ENCODE measurements at regions of chr4 and their contacts with region 1.

Region 1: GRCh38 chr4:62644372-62644771 is 1444.2 kb downstream of the ADGRL3 start:
- DNase-seq: peak; percentile 78
- H3K4me3 Mint-ChIP-seq: no peak overlapping the region
- H3K27ac Mint-ChIP-seq: no peak overlapping the region
- H3K4me1 Mint-ChIP-seq: peaks cover 18% of the 10 kb centered on the region
- H3K27me3 Mint-ChIP-seq: no peaks in the 10 kb centered on the region
- CTCF ChIP-seq: peak; percentile 66

Region 2: GRCh38 chr4:60805500-60806313 is 1838.7 kb before region 1 on chr4:
- CTCF ChIA-PET with region 1: interaction called, 3 read pairs
- POLR2A ChIA-PET with region 1: no interaction called
- intact Hi-C with region 1: loop called (anchors 10 kb)
- DNase-seq: peak; percentile 51
- H3K4me3 Mint-ChIP-seq: no peak overlapping the region
- H3K27ac Mint-ChIP-seq: no peak overlapping the region
- H3K4me1 Mint-ChIP-seq: peaks cover 5% of the 10 kb centered on the region
- H3K27me3 Mint-ChIP-seq: no peaks in the 10 kb centered on the region
- CTCF ChIP-seq: peak; percentile 57

Region 3: DNA sequence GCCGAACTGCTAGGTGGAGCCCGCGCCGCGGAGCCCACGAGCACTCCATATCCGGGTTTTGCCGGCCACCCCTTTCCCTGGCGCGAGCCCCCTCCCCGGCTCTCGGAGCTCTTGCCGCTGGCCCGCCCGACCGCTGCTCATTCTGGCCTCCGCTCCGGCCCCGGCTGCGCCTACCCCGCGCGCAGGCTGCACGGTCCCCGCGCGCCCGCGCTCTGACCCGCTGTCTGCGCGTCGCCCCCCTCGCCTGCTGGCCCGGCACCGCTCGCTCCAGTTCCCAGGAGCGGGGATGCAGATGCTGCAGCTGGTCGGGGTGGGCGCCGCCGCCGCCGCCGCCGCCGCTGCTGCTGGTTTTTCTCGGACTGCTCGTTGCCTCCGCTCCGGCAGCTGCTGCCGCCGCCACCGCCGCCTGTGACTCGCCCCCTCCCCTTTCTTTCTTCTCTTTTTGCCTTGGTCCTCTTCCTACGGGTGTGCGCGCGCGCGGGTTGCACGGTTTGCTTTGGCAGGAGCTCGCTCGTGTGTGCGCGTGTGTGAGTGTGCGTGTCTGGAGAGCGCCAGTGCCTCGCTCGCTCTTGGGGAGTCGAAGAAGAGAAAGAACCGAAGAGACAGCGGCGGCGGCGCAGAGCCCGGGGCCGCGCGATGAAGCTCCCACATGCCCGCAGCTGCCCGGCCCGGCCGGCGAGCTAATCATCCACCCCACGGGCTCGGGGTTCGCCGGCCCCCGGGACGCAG is 1444.0 kb before region 1 on chr4 and contains the start of gene ADGRL3:
- CTCF ChIA-PET with region 1: interaction called, 3 read pairs
- POLR2A ChIA-PET with region 1: no interaction called
- intact Hi-C with region 1: loop called (anchors 10 kb)
- DNase-seq: peak; percentile 38
- H3K4me3 Mint-ChIP-seq: peak within 1 kb of the TSS; percentile 79
- H3K27ac Mint-ChIP-seq: no peak within 1 kb of the TSS
- H3K4me1 Mint-ChIP-seq: peaks cover 22% of the 10 kb centered on the region
- H3K27me3 Mint-ChIP-seq: no peaks in the 10 kb centered on the region
- CTCF ChIP-seq: no peak
- total RNA-seq, gene ADGRL3: 3.5 and 3.6 TPM in 2 replicates

Region 4: GRCh38 chr4:61520681-61521160 is 1123.7 kb before region 1 on chr4:
- CTCF ChIA-PET with region 1: no interaction called
- POLR2A ChIA-PET with region 1: no interaction called
- intact Hi-C with region 1: loop called (anchors 10 kb)
- DNase-seq: peak; percentile 62
- H3K4me3 Mint-ChIP-seq: no peak overlapping the region
- H3K27ac Mint-ChIP-seq: no peak overlapping the region
- H3K4me1 Mint-ChIP-seq: peaks cover 11% of the 10 kb centered on the region
- H3K27me3 Mint-ChIP-seq: no peaks in the 10 kb centered on the region
- CTCF ChIP-seq: no peak

Region 5: GRCh38 chr4:61741327-61742096 is 902.9 kb before region 1 on chr4:
- CTCF ChIA-PET with region 1: no interaction called
- POLR2A ChIA-PET with region 1: interaction called, 3 read pairs
- intact Hi-C with region 1: loop called (anchors 5 kb)
- DNase-seq: peak; percentile 44
- H3K4me3 Mint-ChIP-seq: no peak overlapping the region
- H3K27ac Mint-ChIP-seq: no peak overlapping the region
- H3K4me1 Mint-ChIP-seq: no peaks in the 10 kb centered on the region
- H3K27me3 Mint-ChIP-seq: no peaks in the 10 kb centered on the region
- CTCF ChIP-seq: no peak

Region 6: GRCh38 chr4:62243895-62244294 is 400.5 kb before region 1 on chr4:
- CTCF ChIA-PET with region 1: interaction called, 4 read pairs
- POLR2A ChIA-PET with region 1: no interaction called
- intact Hi-C with region 1: loop called (anchors 1 kb)
- DNase-seq: peak; percentile 10
- H3K4me3 Mint-ChIP-seq: no peak overlapping the region
- H3K27ac Mint-ChIP-seq: no peak overlapping the region
- H3K4me1 Mint-ChIP-seq: no peaks in the 10 kb centered on the region
- H3K27me3 Mint-ChIP-seq: no peaks in the 10 kb centered on the region
- CTCF ChIP-seq: peak; percentile 8

Region 7: GRCh38 chr4:62328526-62328925 is 315.8 kb before region 1 on chr4:
- CTCF ChIA-PET with region 1: no interaction called
- POLR2A ChIA-PET with region 1: no interaction called
- intact Hi-C with region 1: no loop called
- DNase-seq: peak; percentile 35
- H3K4me3 Mint-ChIP-seq: no peak overlapping the region
- H3K27ac Mint-ChIP-seq: no peak overlapping the region
- H3K4me1 Mint-ChIP-seq: peaks cover 13% of the 10 kb centered on the region
- H3K27me3 Mint-ChIP-seq: no peaks in the 10 kb centered on the region
- CTCF ChIP-seq: no peak

Region 8: DNA sequence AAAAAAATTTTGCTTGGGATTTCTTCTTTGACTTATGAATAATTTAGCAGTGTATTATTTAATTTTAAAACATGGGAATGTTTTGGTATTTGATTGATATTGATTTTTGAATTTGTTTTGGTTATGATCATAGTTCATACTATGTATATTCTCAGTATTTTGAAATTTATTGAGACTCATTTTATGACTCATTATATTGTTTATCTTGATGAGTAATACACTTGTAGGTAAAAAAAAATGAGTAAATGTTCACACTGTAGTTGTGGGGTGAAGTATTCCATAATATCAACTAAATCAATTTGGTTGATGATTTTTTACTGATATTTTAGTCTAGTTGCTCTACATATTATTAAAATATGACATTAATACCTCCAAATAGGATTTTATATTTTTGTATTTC is 302.0 kb before region 1 on chr4:
- CTCF ChIA-PET with region 1: no interaction called
- POLR2A ChIA-PET with region 1: no interaction called
- intact Hi-C with region 1: no loop called
- DNase-seq: peak; percentile 27
- H3K4me3 Mint-ChIP-seq: no peak overlapping the region
- H3K27ac Mint-ChIP-seq: no peak overlapping the region
- H3K4me1 Mint-ChIP-seq: no peaks in the 10 kb centered on the region
- H3K27me3 Mint-ChIP-seq: no peaks in the 10 kb centered on the region
- CTCF ChIP-seq: no peak

Region 9: DNA sequence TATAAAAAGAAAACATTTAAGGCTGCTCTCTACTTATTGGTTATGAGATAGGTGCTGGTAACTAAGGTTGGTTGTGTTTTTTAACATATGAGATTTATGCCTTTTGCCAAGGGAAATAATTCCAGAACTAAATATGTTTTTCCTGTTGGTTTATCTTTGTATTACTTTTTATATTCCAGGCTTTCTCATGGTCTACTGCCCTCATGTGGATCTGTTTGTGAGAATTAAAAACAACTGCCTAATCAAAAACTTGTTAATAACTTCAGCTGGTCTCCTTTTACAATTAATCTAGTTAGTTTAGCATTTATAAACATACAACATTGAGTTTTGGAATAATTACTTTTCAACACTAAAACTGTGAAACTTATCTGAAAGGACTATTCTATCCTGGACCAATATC is 235.9 kb before region 1 on chr4:
- CTCF ChIA-PET with region 1: no interaction called
- POLR2A ChIA-PET with region 1: no interaction called
- intact Hi-C with region 1: loop called (anchors 10 kb)
- DNase-seq: peak; percentile 9
- H3K4me3 Mint-ChIP-seq: no peak overlapping the region
- H3K27ac Mint-ChIP-seq: no peak overlapping the region
- H3K4me1 Mint-ChIP-seq: no peaks in the 10 kb centered on the region
- H3K27me3 Mint-ChIP-seq: no peaks in the 10 kb centered on the region
- CTCF ChIP-seq: peak; percentile 28